ENCODE measurements at regions of chr4 and their contacts with region 1.

Region 1: DNA sequence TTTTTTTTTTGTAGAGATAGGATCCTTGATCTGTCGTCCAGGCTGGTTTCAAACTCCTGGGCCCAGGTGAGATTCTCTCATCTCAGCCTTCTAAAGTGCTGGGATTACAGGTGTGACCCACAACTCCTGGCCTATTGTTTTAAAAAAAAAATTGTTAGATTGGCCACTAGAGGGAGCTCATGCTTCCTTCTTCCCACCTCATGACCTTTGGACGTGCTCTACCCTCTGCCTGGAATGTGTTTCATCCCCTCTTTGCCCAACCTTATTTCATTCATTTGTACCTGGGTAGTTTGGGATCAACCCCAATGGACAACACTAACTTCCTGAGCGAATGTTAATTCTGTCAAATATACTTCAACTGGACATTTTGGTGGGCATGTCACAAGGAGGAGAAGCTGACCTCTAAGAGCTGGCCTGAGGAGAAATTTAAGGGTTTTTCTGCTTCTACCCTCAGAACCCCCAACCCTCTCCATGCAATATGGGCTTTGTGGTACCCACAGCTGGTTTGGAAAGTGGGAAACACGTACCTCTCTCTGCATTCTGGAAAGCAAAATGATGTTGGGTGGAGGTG is 6.4 kb downstream of the PPEF2 start:
- DNase-seq: no peak
- ATAC-seq: peak; percentile 85
- H3K4me3 Mint-ChIP-seq: no peak overlapping the region
- H3K27ac Mint-ChIP-seq: no peak overlapping the region
- H3K4me1 Mint-ChIP-seq: no peaks in the 10 kb centered on the region
- H3K27me3 Mint-ChIP-seq: peaks cover 3% of the 10 kb centered on the region
- CTCF ChIP-seq: peak; percentile 73

Region 2: GRCh38 chr4:75849461-75849860 is 46.4 kb before region 1 on chr4:
- CTCF ChIA-PET with region 1: interaction called, 16 read pairs
- POLR2A ChIA-PET with region 1: no interaction called
- DNase-seq: peak; percentile 25
- ATAC-seq: peak; percentile 71
- H3K4me3 Mint-ChIP-seq: no peak overlapping the region
- H3K27ac Mint-ChIP-seq: peak overlapping the region; percentile 70
- H3K4me1 Mint-ChIP-seq: peaks cover 22% of the 10 kb centered on the region
- H3K27me3 Mint-ChIP-seq: no peaks in the 10 kb centered on the region
- CTCF ChIP-seq: no peak

Region 3: GRCh38 chr4:75908555-75908954 is 12.7 kb after region 1 on chr4:
- CTCF ChIA-PET with region 1: interaction called, 54 read pairs
- POLR2A ChIA-PET with region 1: no interaction called
- DNase-seq: no peak
- ATAC-seq: no peak
- H3K4me3 Mint-ChIP-seq: no peak overlapping the region
- H3K27ac Mint-ChIP-seq: no peak overlapping the region
- H3K4me1 Mint-ChIP-seq: peaks cover 23% of the 10 kb centered on the region
- H3K27me3 Mint-ChIP-seq: no peaks in the 10 kb centered on the region
- CTCF ChIP-seq: no peak

Region 4: GRCh38 chr4:75940692-75941253 is 44.9 kb after region 1 on chr4 and contains the start of gene NAAA:
- CTCF ChIA-PET with region 1: interaction called, 18 read pairs
- POLR2A ChIA-PET with region 1: no interaction called
- DNase-seq: peak; percentile 81
- ATAC-seq: peak; percentile 77
- H3K4me3 Mint-ChIP-seq: peak within 1 kb of the TSS; percentile 92
- H3K27ac Mint-ChIP-seq: no peak within 1 kb of the TSS
- H3K4me1 Mint-ChIP-seq: peaks cover 22% of the 10 kb centered on the region
- H3K27me3 Mint-ChIP-seq: peaks cover 16% of the 10 kb centered on the region; the same call in 1 of the 2 replicates
- CTCF ChIP-seq: no peak
- total RNA-seq, gene NAAA: 7.1 to 9.0 TPM (median 8.2 TPM) in 3 replicates

Region 5: GRCh38 chr4:75995727-75996126 is 99.9 kb after region 1 on chr4:
- CTCF ChIA-PET with region 1: interaction called, 10 read pairs
- POLR2A ChIA-PET with region 1: no interaction called
- DNase-seq: no peak
- ATAC-seq: no peak; the same call in 1 of the 2 replicates
- H3K4me3 Mint-ChIP-seq: no peak overlapping the region
- H3K27ac Mint-ChIP-seq: no peak overlapping the region
- H3K4me1 Mint-ChIP-seq: no peaks in the 10 kb centered on the region
- H3K27me3 Mint-ChIP-seq: peaks cover 9% of the 10 kb centered on the region
- CTCF ChIP-seq: peak; percentile 50